Endothelial cell of umbilical vein (primary cell): ENCODE measurements at regions of chr19 and their contacts with region 1.

Region 1: GRCh38 chr19:39970675-39971379 is at the start of gene PSMC4:
- DNase-seq: peak; percentile 100
- H3K4me3 ChIP-seq: peak within 1 kb of the TSS; percentile 70 to 83 (median 79)
- H3K27ac ChIP-seq: peak within 1 kb of the TSS; percentile 82
- H3K4me1 ChIP-seq: peaks cover 13% of the 10 kb centered on the region
- H3K27me3 ChIP-seq: no peaks in the 10 kb centered on the region
- CTCF ChIP-seq: peak; percentile 86 to 89
- POLR2A ChIP-seq: peak; percentile 86
- total RNA-seq, gene PSMC4: 110 and 114 TPM in 2 replicates

Region 2: DNA sequence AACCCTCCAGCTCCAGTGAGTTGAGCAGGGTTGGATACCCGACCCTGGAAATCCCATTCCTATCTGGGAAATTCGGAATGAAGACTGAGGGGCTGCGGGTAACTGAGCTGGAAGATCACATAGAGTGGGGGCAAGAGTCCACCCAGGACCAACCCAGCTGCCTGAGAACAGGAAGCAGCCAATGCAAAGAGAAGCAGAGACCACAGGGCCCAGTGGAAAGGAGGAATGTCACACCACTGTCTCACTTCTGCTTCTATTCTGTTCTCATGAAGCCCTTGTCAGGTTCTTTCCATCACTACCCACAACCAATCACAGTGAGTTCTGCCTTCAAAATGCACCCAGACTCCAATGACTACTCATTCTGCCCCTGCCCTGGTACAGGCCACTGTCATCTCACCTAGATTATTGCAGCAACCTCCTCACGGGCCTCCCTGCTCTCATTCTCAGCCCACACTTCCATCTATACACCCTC is 152.2 kb before region 1 on chr19:
- CTCF ChIA-PET with region 1: no interaction called
- POLR2A ChIA-PET with region 1: no interaction called
- dilution Hi-C with region 1: no loop called
- intact Hi-C with region 1: no loop called
- DNase-seq: no peak
- H3K4me3 ChIP-seq: no peak overlapping the region
- H3K27ac ChIP-seq: no peak overlapping the region
- H3K4me1 ChIP-seq: peaks cover 3% of the 10 kb centered on the region
- H3K27me3 ChIP-seq: no peaks in the 10 kb centered on the region
- CTCF ChIP-seq: no peak
- POLR2A ChIP-seq: no peak

Region 3: DNA sequence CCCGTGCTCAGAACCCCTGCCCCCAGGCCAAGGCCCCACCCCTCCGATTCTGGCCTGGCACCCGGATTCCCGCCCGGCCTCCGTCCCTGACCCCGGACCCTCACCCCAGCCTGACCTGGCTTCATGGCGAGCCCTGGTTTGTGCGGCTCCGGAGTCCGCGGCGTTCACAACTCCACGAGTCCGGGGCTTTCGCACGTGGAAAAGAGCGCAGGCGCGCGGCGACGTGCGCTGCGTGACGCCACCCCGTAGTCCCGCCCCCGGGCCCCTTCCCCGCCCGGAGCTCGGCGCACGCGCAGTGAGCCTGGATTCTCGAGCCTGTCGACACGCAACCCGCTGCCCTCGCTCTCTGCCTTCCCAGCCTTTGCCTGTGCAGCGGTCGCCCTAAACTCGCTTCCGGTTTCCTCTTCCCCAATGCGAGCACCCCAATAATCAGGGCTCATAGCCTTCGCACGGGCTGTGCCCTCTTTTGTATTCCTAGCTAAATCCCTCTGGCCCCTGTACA is 124.6 kb before region 1 on chr19 and contains the start of gene FBL:
- CTCF ChIA-PET with region 1: interaction called, 17 read pairs
- POLR2A ChIA-PET with region 1: interaction called, 5 read pairs
- dilution Hi-C with region 1: no loop called
- intact Hi-C with region 1: no loop called
- DNase-seq: peak; percentile 92
- H3K4me3 ChIP-seq: peak within 1 kb of the TSS; percentile 71 to 84 (median 76)
- H3K27ac ChIP-seq: peak within 1 kb of the TSS; percentile 64
- H3K4me1 ChIP-seq: peaks cover 24% of the 10 kb centered on the region
- H3K27me3 ChIP-seq: no peaks in the 10 kb centered on the region
- CTCF ChIP-seq: no peak
- POLR2A ChIP-seq: peak; percentile 78
- total RNA-seq, gene FBL: 271 and 277 TPM in 2 replicates

Region 4: DNA sequence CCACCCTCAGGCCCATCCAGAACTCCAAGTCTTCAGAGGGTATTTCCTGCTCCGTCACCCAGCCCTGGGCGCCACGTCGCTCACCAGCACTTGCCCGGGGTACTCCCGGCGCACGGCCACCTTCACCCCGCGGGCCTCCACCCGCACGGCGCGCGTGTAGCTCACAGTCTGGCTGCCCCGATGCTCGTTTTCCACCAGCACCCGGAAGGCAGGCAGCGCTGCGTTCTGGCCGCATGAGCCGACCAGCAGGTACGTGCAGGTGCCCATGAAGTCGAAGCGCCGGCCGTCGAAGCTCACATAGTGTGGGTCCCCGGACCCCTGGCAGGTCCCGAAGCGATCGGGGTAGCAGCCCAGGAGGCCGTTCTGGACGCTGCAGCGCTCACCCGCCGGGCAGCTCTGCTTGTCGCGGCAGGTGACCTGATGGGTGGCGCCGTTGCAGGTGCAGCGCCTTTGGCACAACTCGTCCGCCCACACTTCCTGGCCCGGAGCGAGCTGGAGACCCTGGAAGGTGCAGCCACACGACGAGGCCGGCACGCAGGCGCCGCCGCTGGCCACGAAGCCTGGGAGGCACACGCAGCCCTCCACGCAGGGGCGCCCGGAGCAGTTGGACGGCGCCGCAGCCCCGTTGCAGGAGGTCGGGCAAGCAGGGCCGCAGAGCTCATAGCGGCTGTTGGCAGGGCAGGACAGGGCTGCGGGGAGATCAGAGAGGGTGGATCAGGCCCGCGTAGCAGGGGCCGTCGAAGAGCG is 55.6 kb before region 1 on chr19:
- CTCF ChIA-PET with region 1: interaction called, 11 read pairs
- POLR2A ChIA-PET with region 1: no interaction called
- dilution Hi-C with region 1: no loop called
- intact Hi-C with region 1: no loop called
- DNase-seq: no peak
- H3K4me3 ChIP-seq: no peak overlapping the region
- H3K27ac ChIP-seq: no peak overlapping the region
- H3K4me1 ChIP-seq: no peaks in the 10 kb centered on the region
- H3K27me3 ChIP-seq: peaks cover 0 to 1% of the 10 kb centered on the region in 2 experiments
- CTCF ChIP-seq: no peak
- POLR2A ChIP-seq: no peak

Region 5: DNA sequence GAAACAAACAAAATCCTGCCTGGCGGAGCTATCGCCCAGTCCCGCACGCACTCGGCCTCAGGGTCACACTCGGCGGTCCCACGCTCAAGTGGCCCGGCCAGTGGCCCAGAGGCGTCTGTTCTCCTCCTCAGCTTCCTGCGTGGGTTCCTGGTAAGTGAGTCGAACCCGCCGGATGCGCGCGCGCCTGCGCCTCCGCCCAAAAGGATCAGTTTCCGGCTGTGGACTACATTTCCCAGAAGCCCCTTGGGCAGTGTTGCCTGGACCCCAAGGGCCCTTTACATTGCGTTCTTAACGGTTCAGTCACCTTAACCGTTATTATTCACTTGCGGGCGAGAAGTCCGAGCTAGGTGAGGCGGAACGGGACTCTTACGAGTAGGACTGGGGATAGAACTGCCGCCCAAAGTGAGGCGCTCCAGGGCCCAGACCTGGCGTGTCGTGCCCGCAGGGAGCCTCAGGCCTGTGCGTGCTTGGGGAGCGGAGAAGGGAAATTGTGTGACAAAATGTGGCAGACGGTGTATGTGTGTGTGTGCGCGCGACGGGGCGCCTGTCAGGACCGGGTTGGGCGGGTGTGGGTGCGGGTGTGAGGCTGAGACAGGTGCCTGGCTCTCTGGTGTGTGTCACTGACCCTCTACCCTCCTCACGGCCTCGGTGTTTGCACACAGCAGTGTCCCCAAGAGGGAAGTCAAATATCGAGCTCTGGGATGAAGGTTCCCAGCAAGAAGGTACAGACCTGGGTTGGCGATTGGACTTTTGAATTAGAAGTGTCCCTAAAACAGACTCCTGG is 26.2 kb after region 1 on chr19 and contains the start of gene ZNF546:
- CTCF ChIA-PET with region 1: interaction called, 6 read pairs
- POLR2A ChIA-PET with region 1: interaction called, 4 read pairs
- dilution Hi-C with region 1: no loop called
- intact Hi-C with region 1: loop called (anchors 1 kb)
- DNase-seq: peak; percentile 95
- H3K4me3 ChIP-seq: peak within 1 kb of the TSS; percentile 42 to 76 (median 70)
- H3K27ac ChIP-seq: peak within 1 kb of the TSS; percentile 74
- H3K4me1 ChIP-seq: peaks cover 11% of the 10 kb centered on the region
- H3K27me3 ChIP-seq: no peaks in the 10 kb centered on the region
- CTCF ChIP-seq: no peak
- POLR2A ChIP-seq: peak; percentile 97
- total RNA-seq, gene ZNF546: 4.3 and 4.4 TPM in 2 replicates

Region 6: GRCh38 chr19:40025938-40026596 is 55.2 kb after region 1 on chr19:
- CTCF ChIA-PET with region 1: no interaction called
- POLR2A ChIA-PET with region 1: no interaction called
- dilution Hi-C with region 1: no loop called
- intact Hi-C with region 1: no loop called
- DNase-seq: no peak
- H3K4me3 ChIP-seq: no peak overlapping the region
- H3K27ac ChIP-seq: no peak overlapping the region
- H3K4me1 ChIP-seq: no peaks in the 10 kb centered on the region
- H3K27me3 ChIP-seq: no peaks in the 10 kb centered on the region
- CTCF ChIP-seq: no peak
- POLR2A ChIP-seq: no peak

Region 7: DNA sequence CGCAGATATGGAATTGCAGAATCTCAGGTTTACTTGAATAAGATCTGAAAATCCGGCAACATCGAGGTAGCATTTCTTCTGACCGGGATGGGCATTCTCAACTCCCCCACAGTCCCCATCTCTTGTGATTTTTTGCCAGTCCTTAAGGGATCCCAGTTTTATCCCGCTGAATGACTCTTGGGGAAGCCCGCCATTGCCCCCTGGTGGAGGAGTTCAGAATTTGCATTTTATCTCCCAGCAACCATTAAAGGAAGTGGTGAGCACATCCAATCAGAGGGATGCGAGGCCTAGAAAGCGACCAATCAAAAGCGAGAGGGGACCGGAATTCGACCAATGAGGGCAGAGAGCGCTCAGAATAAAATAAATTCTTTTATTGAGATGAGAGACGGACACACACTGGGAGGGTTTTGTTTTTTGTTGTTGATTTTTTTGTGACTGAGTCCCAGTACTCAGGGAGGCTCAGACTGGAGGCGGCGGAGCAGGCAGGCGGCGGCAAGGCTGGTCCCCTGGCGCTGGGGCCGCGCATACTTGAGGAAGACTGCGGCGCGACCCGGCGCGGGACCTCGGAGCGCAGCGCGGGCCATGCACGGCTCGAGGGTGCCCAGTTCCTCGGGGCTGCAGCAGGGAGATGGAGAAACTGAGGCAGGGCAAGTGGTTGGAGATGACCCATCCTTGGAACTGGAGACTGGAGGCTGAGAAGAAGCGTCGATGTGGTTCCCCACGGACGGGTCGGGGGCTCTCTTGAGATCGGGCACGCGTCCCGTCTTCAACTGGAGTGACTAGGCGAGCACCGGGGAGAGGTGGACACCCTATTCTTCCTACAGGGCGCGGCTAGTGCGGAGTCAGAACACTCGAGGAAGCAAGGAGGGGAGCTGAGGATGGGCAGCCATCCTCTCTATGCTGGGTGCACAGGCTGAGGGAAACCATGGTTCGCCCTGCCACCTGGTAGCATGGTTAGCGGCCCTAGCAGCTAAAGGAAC is 251.3 kb after region 1 on chr19:
- CTCF ChIA-PET with region 1: no interaction called
- POLR2A ChIA-PET with region 1: no interaction called
- dilution Hi-C with region 1: no loop called
- intact Hi-C with region 1: loop called (anchors 1 kb)
- DNase-seq: peak; percentile 91
- H3K4me3 ChIP-seq: no peak overlapping the region
- H3K27ac ChIP-seq: no peak overlapping the region
- H3K4me1 ChIP-seq: peaks cover 11% of the 10 kb centered on the region
- H3K27me3 ChIP-seq: peaks cover 22 to 30% of the 10 kb centered on the region in 2 experiments
- CTCF ChIP-seq: peak; percentile 73 to 88
- POLR2A ChIP-seq: no peak